ENCODE measurements at regions of chr22 and their contacts with region 1.

Region 1: DNA sequence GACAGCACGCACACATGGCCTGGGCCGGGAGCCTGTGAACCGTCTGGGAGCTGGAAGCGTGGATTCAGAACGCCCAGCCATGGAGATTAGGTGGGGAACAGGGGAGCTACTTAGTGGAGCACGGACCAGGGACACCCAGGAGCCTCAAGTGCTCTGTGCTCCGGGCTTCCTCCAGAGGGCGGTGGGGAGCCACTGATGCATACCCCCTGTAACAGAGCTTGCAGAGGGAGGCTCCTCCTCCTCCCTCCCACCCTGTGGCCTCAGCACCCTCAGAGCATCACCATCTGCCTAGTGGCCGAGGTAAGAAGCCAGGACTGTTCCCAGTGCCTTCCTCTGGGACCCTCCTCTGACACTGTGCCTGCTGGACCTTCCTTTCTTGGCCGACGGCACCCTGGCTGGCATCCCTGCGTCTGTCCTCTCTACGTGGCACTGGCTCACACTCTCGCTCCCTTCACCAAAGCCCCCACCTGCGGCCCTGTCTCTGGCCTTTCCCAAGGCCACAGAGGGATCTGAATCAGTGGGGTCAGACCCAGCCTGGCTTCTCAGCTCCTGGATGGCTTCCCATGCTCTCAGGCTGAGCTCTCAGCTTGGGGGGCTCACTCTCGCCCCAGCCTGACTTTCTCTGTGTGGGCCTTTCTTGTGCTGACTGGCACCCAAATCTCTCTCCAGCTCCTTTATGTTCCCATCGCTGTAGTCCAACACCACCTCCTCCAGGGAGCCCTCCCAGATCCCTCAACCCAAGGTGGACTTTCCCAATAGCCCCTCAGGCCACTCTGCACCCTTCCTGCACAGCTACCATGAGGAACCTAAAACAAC is 780.9 kb downstream of the BRD1 start:
- DNase-seq: no peak
- ATAC-seq: peak; percentile 95
- H3K4me3 ChIP-seq: no peak overlapping the region
- H3K27ac ChIP-seq: no peak overlapping the region
- H3K4me1 ChIP-seq: no peaks in the 10 kb centered on the region
- H3K27me3 ChIP-seq: no peaks in the 10 kb centered on the region; the same call in 1 of the 2 replicates
- CTCF ChIP-seq: peak; percentile 74; the same call in 1 of the 2 replicates

Region 2: DNA sequence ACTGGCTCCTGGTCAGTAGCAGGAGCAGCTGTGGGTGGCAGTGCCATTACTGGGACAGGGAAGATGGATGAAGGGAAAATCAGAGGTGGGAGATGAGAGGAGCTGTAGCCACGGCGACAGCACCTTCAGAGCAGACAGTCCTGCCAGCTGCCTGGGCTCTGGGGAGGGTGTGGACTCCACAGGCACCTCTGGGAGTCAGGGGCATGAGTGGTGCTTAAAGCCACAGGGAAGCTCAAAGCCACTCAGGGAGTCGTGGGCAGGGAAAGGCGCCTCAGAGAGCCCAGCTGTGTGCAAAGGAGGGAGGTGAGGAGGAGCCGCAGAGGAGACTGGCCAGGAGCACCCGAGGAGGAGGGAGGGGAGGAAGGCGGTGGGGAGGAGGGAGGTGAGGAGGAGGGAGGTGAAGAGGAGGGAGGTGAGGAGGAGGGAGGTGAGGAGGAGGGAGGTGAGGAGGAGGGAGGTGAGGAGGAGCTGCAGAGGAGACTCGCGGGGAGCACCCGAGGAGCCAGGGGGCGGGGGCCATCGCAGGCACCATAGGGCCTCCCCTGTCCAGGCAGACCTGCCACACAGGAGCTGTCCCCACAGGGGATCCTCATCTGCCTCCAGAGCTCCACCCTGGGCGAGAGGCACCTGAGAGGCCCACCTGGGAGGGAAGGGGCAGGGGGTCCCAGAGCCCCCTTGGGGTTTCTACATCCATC is 196.6 kb before region 1 on chr22:
- CTCF ChIA-PET with region 1: no interaction called
- POLR2A ChIA-PET with region 1: interaction called, 10 read pairs
- in situ Hi-C with region 1: no loop called
- intact Hi-C with region 1: no loop called
- DNase-seq: no peak
- ATAC-seq: no peak
- H3K4me3 ChIP-seq: no peak overlapping the region
- H3K27ac ChIP-seq: no peak overlapping the region
- H3K4me1 ChIP-seq: no peaks in the 10 kb centered on the region
- H3K27me3 ChIP-seq: no peaks in the 10 kb centered on the region; the same call in 1 of the 2 replicates
- CTCF ChIP-seq: no peak

Region 3: DNA sequence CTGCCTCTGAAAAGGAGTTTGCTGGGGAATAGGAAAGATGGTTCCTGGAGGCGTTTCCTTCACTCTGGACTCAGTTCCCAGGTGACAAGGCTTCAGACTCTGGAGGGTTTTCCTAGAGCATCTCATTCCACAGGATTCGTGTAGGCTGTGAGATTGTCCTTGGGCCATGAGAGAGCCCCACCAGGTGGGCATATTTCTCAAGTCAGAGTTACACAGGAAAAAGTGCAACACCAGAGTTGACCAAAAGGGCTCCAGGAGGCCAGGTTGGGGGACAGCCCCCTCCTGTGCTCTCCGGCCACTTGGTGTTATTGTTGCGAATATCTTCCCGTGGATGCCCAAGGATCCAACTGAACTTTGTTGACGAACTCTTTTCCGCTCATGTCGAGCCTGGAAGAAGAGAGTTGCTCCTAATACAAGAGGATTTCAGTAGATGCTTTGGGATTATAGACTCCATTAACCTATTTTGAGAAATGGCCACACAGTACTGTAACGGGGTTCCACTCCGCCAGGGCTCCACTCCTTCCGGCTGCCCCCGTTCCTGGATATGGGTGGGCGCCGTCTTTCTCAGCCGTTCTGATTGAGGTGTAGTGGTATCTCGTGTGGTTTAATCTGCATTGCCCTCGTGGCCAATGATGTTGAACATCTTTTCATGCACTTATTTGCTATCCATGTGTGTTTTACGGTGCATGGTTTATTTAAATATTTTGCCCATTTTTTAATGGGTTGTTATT is 200.6 kb after region 1 on chr22:
- CTCF ChIA-PET with region 1: no interaction called
- POLR2A ChIA-PET with region 1: no interaction called
- in situ Hi-C with region 1: no loop called
- intact Hi-C with region 1: no loop called
- DNase-seq: no peak
- ATAC-seq: no peak
- H3K4me3 ChIP-seq: no peak overlapping the region
- H3K27ac ChIP-seq: no peak overlapping the region
- H3K4me1 ChIP-seq: no peaks in the 10 kb centered on the region
- H3K27me3 ChIP-seq: peaks cover 2% of the 10 kb centered on the region; the same call in 1 of the 2 replicates
- CTCF ChIP-seq: no peak

Region 4: GRCh38 chr22:49305214-49305909 is 258.6 kb after region 1 on chr22:
- CTCF ChIA-PET with region 1: interaction called, 11 read pairs
- POLR2A ChIA-PET with region 1: interaction called, 4 read pairs
- in situ Hi-C with region 1: no loop called
- intact Hi-C with region 1: loop called (anchors 2 kb)
- DNase-seq: no peak
- ATAC-seq: peak; percentile 95
- H3K4me3 ChIP-seq: no peak overlapping the region
- H3K27ac ChIP-seq: no peak overlapping the region
- H3K4me1 ChIP-seq: no peaks in the 10 kb centered on the region
- H3K27me3 ChIP-seq: no peaks in the 10 kb centered on the region; the same call in 1 of the 2 replicates
- CTCF ChIP-seq: peak; percentile 92

Measured in Panc1 (cell line).